GM12878 (cell line): ENCODE measurements at regions of chr3 and their contacts with region 1.

Region 1: DNA sequence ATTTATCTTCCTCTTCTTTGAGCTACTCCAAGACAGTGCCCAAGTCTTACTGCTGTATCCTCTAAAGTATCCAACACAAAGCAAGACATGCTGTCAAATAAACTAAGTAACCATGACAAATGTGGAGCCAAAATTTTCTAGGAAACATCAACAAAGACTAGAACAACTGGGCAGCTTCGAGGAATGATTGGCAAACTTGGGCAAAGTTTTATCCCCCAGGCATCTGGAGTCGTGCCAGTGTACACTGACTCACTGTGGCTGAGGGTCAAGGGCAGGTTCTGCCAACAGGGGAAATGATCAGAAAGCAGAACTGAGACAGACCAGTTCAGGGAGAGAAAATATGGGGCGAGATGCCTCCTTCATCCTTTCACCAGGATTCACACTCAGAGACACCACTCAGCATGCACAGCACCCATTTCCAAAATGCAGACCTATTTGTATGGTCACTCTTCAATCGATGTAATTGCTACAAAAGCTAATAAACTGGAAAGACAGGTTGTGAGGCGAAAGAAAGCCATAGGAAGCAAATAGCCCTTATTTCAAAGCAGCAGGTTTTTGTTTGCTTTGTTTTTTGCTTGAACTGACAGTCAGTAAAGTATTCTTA is 65.7 kb downstream of the MB21D2 start:
- DNase-seq: no peak
- ATAC-seq: peak; percentile 75
- H3K4me3 ChIP-seq: peak overlapping the region; percentile 18; the same call in 1 of the 2 replicates
- H3K27ac ChIP-seq: peak overlapping the region; percentile 81
- H3K4me1 ChIP-seq: peaks cover 58% of the 10 kb centered on the region
- H3K27me3 ChIP-seq: no peaks in the 10 kb centered on the region
- CTCF ChIP-seq: no peak
- EP300 ChIP-seq: peak in 1 of 2 experiments; percentile 63; a peak in 1 of 4 replicates
- POLR2A ChIP-seq: no peak
- RAD21 ChIP-seq: no peak

Region 2: GRCh38 chr3:192831111-192831644 is 20.7 kb before region 1 on chr3:
- CTCF ChIA-PET with region 1: interaction called, 8 read pairs
- POLR2A ChIA-PET with region 1: interaction called, 8 read pairs
- RAD21 ChIA-PET with region 1: interaction called, 27 read pairs
- SMC1A ChIA-PET with region 1: interaction called, 37 read pairs
- in situ Hi-C with region 1: no loop called
- intact Hi-C with region 1: loop called (anchors 2 kb)
- DNase-seq: no peak
- ATAC-seq: peak; percentile 53
- H3K4me3 ChIP-seq: peak overlapping the region; percentile 28; the same call in 1 of the 2 replicates
- H3K27ac ChIP-seq: peak overlapping the region; percentile 80
- H3K4me1 ChIP-seq: peaks cover 18% of the 10 kb centered on the region
- H3K27me3 ChIP-seq: no peaks in the 10 kb centered on the region
- CTCF ChIP-seq: no peak
- EP300 ChIP-seq: no peak
- POLR2A ChIP-seq: no peak
- RAD21 ChIP-seq: no peak

Region 3: GRCh38 chr3:192879336-192880106 is 27.6 kb after region 1 on chr3:
- CTCF ChIA-PET with region 1: interaction called, 5 read pairs
- POLR2A ChIA-PET with region 1: no interaction called
- RAD21 ChIA-PET with region 1: interaction called, 5 read pairs
- SMC1A ChIA-PET with region 1: interaction called, 11 read pairs
- in situ Hi-C with region 1: no loop called
- intact Hi-C with region 1: no loop called
- DNase-seq: no peak
- ATAC-seq: no peak
- H3K4me3 ChIP-seq: no peak overlapping the region
- H3K27ac ChIP-seq: no peak overlapping the region
- H3K4me1 ChIP-seq: 0 out of 2 replicates have a peak, but pooled peaks cover 3% of the 10 kb centered on the region
- H3K27me3 ChIP-seq: no peaks in the 10 kb centered on the region
- CTCF ChIP-seq: no peak
- EP300 ChIP-seq: no peak
- POLR2A ChIP-seq: no peak
- RAD21 ChIP-seq: no peak

Region 4: GRCh38 chr3:192892981-192893700 is 41.2 kb after region 1 on chr3:
- CTCF ChIA-PET with region 1: interaction called, 27 read pairs
- POLR2A ChIA-PET with region 1: interaction called, 16 read pairs
- RAD21 ChIA-PET with region 1: interaction called, 105 read pairs
- SMC1A ChIA-PET with region 1: interaction called, 283 read pairs
- in situ Hi-C with region 1: no loop called
- intact Hi-C with region 1: loop called (anchors 1 kb)
- DNase-seq: peak; percentile 94
- ATAC-seq: peak; percentile 93
- H3K4me3 ChIP-seq: no peak overlapping the region; the same call in 1 of the 2 replicates
- H3K27ac ChIP-seq: peak overlapping the region; percentile 96
- H3K4me1 ChIP-seq: peaks cover 74% of the 10 kb centered on the region
- H3K27me3 ChIP-seq: no peaks in the 10 kb centered on the region
- CTCF ChIP-seq: no peak
- EP300 ChIP-seq: peak; percentile 98 to 99
- POLR2A ChIP-seq: peak; percentile 55
- RAD21 ChIP-seq: peak; percentile 25; the same call in 1 of the 2 replicates

Region 5: GRCh38 chr3:194797555-194798250 is 1945.8 kb after region 1 on chr3:
- CTCF ChIA-PET with region 1: no interaction called
- POLR2A ChIA-PET with region 1: no interaction called
- RAD21 ChIA-PET with region 1: no interaction called
- SMC1A ChIA-PET with region 1: no interaction called
- in situ Hi-C with region 1: no loop called
- intact Hi-C with region 1: no loop called
- DNase-seq: no peak
- ATAC-seq: no peak
- H3K4me3 ChIP-seq: no peak overlapping the region
- H3K27ac ChIP-seq: no peak overlapping the region
- H3K4me1 ChIP-seq: no peaks in the 10 kb centered on the region
- H3K27me3 ChIP-seq: peaks cover 0 to 2% of the 10 kb centered on the region in 2 experiments; a peak in 3 of 4 replicates
- CTCF ChIP-seq: no peak
- EP300 ChIP-seq: no peak
- POLR2A ChIP-seq: no peak
- RAD21 ChIP-seq: no peak